WTC11 (cell line): ENCODE measurements at regions of chr3 and their contacts with region 1.

Region 1: GRCh38 chr3:14261229-14261628 is 82.6 kb downstream of the LSM3 start:
- DNase-seq: peak; percentile 92
- ATAC-seq: peak; percentile 85
- H3K4me3 Mint-ChIP-seq: no peak overlapping the region
- H3K27ac Mint-ChIP-seq: no peak overlapping the region
- H3K4me1 Mint-ChIP-seq: peaks cover 17% of the 10 kb centered on the region
- H3K27me3 Mint-ChIP-seq: peaks cover 5% of the 10 kb centered on the region
- CTCF ChIP-seq: peak; percentile 99

Region 2: GRCh38 chr3:14301558-14301957 is 40.3 kb after region 1 on chr3:
- CTCF ChIA-PET with region 1: no interaction called
- POLR2A ChIA-PET with region 1: no interaction called
- DNase-seq: no peak
- ATAC-seq: peak; percentile 35
- H3K4me3 Mint-ChIP-seq: no peak overlapping the region
- H3K27ac Mint-ChIP-seq: no peak overlapping the region
- H3K4me1 Mint-ChIP-seq: peaks cover 24% of the 10 kb centered on the region
- H3K27me3 Mint-ChIP-seq: peaks cover 5% of the 10 kb centered on the region
- CTCF ChIP-seq: no peak

Region 3: GRCh38 chr3:14369675-14370669 is 108.7 kb after region 1 on chr3:
- CTCF ChIA-PET with region 1: interaction called, 12 read pairs
- POLR2A ChIA-PET with region 1: no interaction called
- DNase-seq: peak; percentile 70
- ATAC-seq: peak; percentile 95
- H3K4me3 Mint-ChIP-seq: no peak overlapping the region
- H3K27ac Mint-ChIP-seq: peak overlapping the region; percentile 19; the same call in 1 of the 2 replicates
- H3K4me1 Mint-ChIP-seq: peaks cover 51% of the 10 kb centered on the region
- H3K27me3 Mint-ChIP-seq: peaks cover 2% of the 10 kb centered on the region; the same call in 1 of the 2 replicates
- CTCF ChIP-seq: no peak

Region 4: GRCh38 chr3:14461748-14462324 is 200.6 kb after region 1 on chr3:
- CTCF ChIA-PET with region 1: interaction called, 15 read pairs
- POLR2A ChIA-PET with region 1: no interaction called
- DNase-seq: peak; percentile 58
- ATAC-seq: peak; percentile 49
- H3K4me3 Mint-ChIP-seq: no peak overlapping the region
- H3K27ac Mint-ChIP-seq: no peak overlapping the region
- H3K4me1 Mint-ChIP-seq: peaks cover 28% of the 10 kb centered on the region
- H3K27me3 Mint-ChIP-seq: no peaks in the 10 kb centered on the region; the same call in 1 of the 2 replicates
- CTCF ChIP-seq: no peak

Region 5: DNA sequence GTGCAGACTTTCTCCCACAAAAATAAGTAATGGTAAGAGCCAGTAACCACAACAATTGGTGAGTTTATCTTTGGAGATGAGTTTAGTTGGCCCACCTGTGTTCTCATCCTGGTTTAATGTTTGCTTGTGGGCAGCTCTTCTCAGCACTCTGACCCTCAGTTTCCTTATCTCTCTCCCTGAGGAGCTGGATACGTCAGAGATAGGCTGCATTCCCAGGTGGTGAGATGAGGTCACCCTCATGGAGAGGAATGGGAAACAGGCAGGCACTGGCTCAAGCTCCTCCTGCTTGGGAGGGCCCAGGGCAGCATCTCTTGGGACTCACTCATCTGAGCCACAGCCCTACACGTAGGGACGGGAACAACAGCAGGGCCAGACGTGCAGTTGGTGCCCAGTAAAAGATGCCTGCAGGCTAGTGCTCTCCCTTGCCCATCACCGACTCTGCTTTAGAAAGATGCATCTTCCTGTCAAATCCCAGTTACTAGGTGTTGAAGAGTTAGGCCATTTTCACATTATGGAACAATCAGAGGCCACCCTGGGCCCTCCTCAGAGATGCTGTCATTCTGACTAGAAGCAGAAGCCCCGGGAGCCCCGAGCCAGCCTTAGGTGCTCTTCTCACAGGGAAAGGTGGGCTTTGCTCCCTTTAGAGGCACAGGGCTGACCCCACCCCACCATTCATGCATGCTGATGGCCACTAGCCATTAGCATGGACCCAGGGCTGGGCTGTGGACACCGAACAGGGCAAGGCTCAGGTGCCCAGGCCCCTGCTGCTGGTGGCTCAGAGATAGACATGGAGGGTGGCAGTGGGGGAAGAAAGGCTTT is 219.2 kb after region 1 on chr3:
- CTCF ChIA-PET with region 1: no interaction called
- POLR2A ChIA-PET with region 1: no interaction called
- DNase-seq: no peak
- ATAC-seq: no peak
- H3K4me3 Mint-ChIP-seq: no peak overlapping the region
- H3K27ac Mint-ChIP-seq: no peak overlapping the region
- H3K4me1 Mint-ChIP-seq: peaks cover 11% of the 10 kb centered on the region
- H3K27me3 Mint-ChIP-seq: no peaks in the 10 kb centered on the region
- CTCF ChIP-seq: no peak